ENCODE measurements at regions of chr15 and their contacts with region 1.

Region 1: GRCh38 chr15:40044717-40045571 is 6.0 kb upstream of the SRP14 start:
- DNase-seq: peak; percentile 77
- H3K4me3 Mint-ChIP-seq: peak overlapping the region; percentile 21
- H3K27ac Mint-ChIP-seq: peak overlapping the region; percentile 61
- H3K4me1 Mint-ChIP-seq: peaks cover 81% of the 10 kb centered on the region
- H3K27me3 Mint-ChIP-seq: no peaks in the 10 kb centered on the region

Region 2: DNA sequence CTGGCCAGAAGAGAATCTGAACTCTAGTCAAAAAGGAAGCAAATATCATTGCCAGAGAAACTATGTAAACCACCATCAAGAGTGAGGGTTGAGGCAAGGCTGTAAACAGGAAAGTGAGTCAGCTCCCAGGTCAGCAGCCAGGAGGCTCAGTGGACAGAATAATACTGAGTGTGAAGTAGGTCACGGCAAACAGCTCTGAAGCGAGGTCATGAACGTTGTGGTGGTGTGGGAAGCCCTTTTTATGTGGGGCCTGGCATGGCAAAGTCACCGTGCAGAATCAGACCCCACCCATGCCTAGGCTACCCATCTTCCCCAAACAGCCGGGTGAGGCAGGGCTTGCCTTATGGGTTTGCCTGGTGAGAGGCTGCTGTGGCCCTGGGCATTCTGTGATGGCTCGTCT is 420.1 kb before region 1 on chr15:
- intact Hi-C with region 1: loop called (anchors 5 kb)
- DNase-seq: peak; percentile 65
- H3K4me3 Mint-ChIP-seq: peak overlapping the region; percentile 71
- H3K27ac Mint-ChIP-seq: peak overlapping the region; percentile 98
- H3K4me1 Mint-ChIP-seq: peaks cover 81% of the 10 kb centered on the region
- H3K27me3 Mint-ChIP-seq: no peaks in the 10 kb centered on the region

Region 3: GRCh38 chr15:40010686-40011085 is 34.3 kb before region 1 on chr15:
- intact Hi-C with region 1: no loop called
- DNase-seq: no peak
- H3K4me3 Mint-ChIP-seq: no peak overlapping the region
- H3K27ac Mint-ChIP-seq: no peak overlapping the region
- H3K4me1 Mint-ChIP-seq: no peaks in the 10 kb centered on the region
- H3K27me3 Mint-ChIP-seq: no peaks in the 10 kb centered on the region

Region 4: GRCh38 chr15:40098489-40099261 is 53.7 kb after region 1 on chr15:
- intact Hi-C with region 1: loop called (anchors 1 kb)
- DNase-seq: peak; percentile 72
- H3K4me3 Mint-ChIP-seq: peak overlapping the region; percentile 74
- H3K27ac Mint-ChIP-seq: peak overlapping the region; percentile 99
- H3K4me1 Mint-ChIP-seq: peaks cover 87% of the 10 kb centered on the region
- H3K27me3 Mint-ChIP-seq: peaks cover 2% of the 10 kb centered on the region

Region 5: GRCh38 chr15:40160689-40161688 is 116.0 kb after region 1 on chr15 and contains the start of gene BUB1B:
- intact Hi-C with region 1: loop called (anchors 1 kb)
- DNase-seq: peak; percentile 93
- H3K4me3 Mint-ChIP-seq: no peak within 1 kb of the TSS
- H3K27ac Mint-ChIP-seq: no peak within 1 kb of the TSS
- H3K4me1 Mint-ChIP-seq: peaks cover 10% of the 10 kb centered on the region
- H3K27me3 Mint-ChIP-seq: no peaks in the 10 kb centered on the region
- total RNA-seq, gene BUB1B: 71.0 and 76.1 TPM in 2 replicates

Region 6: GRCh38 chr15:40217159-40217824 is 172.3 kb after region 1 on chr15:
- intact Hi-C with region 1: loop called (anchors 1 kb)
- DNase-seq: peak; percentile 38
- H3K4me3 Mint-ChIP-seq: no peak overlapping the region
- H3K27ac Mint-ChIP-seq: no peak overlapping the region
- H3K4me1 Mint-ChIP-seq: no peaks in the 10 kb centered on the region
- H3K27me3 Mint-ChIP-seq: no peaks in the 10 kb centered on the region

Region 7: DNA sequence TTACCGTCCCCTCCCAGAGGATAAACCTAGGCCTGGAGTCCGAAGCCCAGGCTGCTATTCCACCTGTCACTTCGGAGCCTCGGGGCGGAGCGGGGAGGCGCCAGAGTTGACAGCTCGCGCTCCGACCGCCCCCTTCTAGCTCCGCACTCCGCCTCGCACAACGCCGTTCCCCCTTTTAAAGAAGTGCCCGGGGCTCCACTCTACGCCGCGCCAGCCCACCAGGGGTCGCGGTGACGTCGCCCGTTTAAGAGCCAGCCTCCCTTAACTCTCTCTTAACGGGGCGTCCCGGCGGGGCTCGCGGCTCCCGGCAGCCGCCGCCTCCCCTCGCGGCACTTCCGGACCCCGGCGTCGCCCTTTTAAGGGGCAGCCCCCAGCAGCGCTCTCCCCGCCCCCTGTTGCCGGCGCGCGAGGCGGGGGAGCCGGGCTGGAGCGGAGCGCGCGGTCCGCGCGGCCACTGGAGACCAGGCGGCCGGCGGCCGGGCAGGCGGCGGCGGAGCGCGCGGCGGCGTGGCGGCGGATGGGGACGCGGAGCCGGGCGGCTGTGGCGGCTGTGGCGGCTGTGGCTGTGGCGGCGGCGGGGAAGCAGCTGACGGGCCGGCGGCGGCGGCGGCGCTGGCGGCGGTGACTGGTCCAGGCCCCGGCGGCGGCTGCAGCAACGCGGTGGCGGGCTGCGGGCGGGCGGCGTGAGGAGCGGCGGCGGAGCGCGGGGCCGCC is 278.5 kb after region 1 on chr15 and contains the start of gene INAFM2:
- intact Hi-C with region 1: loop called (anchors 5 kb)
- DNase-seq: peak; percentile 83
- H3K4me3 Mint-ChIP-seq: peak within 1 kb of the TSS; percentile 83
- H3K27ac Mint-ChIP-seq: no peak within 1 kb of the TSS
- H3K4me1 Mint-ChIP-seq: peaks cover 52% of the 10 kb centered on the region
- H3K27me3 Mint-ChIP-seq: peaks cover 15% of the 10 kb centered on the region
- total RNA-seq, gene INAFM2: 19.2 and 25.1 TPM in 2 replicates